Psoas muscle (tissue), 8 donors: ENCODE measurements at regions of chr9 and their contacts with region 1.

Region 1: GRCh38 chr9:93453047-93453914 is at the start of gene FAM120AOS:
- DNase-seq: peak; percentile 91 to 93
- ATAC-seq: peak; percentile 77 to 87 (median 81)
- H3K4me3 ChIP-seq: peak within 1 kb of the TSS; percentile 80
- H3K27ac ChIP-seq: peak within 1 kb of the TSS; percentile 98
- H3K4me1 ChIP-seq: peaks cover 50% of the 10 kb centered on the region
- H3K27me3 ChIP-seq: no peaks in the 10 kb centered on the region
- CTCF ChIP-seq: no peak
- total RNA-seq, gene FAM120AOS: 26.8 to 35.1 (median 29.9) TPM

Region 2: GRCh38 chr9:93095205-93096130 is 357.8 kb before region 1 on chr9:
- intact Hi-C with region 1: loop called in 1 of 2 experiments (anchors 10 kb)
- DNase-seq: peak; percentile 100
- ATAC-seq: peak; percentile 82 to 85 (median 84)
- H3K4me3 ChIP-seq: peak overlapping the region; percentile 99
- H3K27ac ChIP-seq: peak overlapping the region; percentile 98
- H3K4me1 ChIP-seq: peaks cover 32% of the 10 kb centered on the region
- H3K27me3 ChIP-seq: no peaks in the 10 kb centered on the region
- CTCF ChIP-seq: no peak

Region 3: GRCh38 chr9:93510041-93510440 is 56.8 kb after region 1 on chr9:
- intact Hi-C with region 1: loop called in 1 of 2 experiments (anchors 5 kb)
- DNase-seq: no peak
- ATAC-seq: no peak
- H3K4me3 ChIP-seq: no peak overlapping the region
- H3K27ac ChIP-seq: peak overlapping the region; percentile 48
- H3K4me1 ChIP-seq: peaks cover 66% of the 10 kb centered on the region
- H3K27me3 ChIP-seq: no peaks in the 10 kb centered on the region
- CTCF ChIP-seq: no peak

Region 4: DNA sequence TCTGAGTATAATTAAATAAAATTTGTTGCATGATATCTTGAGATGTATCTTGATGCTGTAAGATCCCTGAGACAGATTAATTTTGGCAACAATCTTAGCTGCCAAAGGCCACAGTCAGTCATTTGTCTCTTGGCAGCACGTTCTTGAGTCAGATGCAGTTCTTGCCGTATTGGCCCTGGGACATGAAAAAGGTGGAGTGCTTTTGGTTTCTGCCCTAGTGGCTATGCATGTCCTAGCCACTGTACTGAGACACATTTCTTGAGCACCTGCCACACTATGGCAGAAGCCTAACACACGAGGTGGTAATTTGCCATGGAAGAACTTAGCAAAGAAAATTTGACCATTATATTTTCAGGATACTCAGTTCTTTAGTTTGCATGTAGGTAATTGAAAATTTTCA is 78.1 kb after region 1 on chr9:
- intact Hi-C with region 1: loop called in 1 of 2 experiments (anchors 5 kb)
- DNase-seq: no peak
- ATAC-seq: peak; percentile 92 to 99 (median 97)
- H3K4me3 ChIP-seq: no peak overlapping the region
- H3K27ac ChIP-seq: peak overlapping the region; percentile 38
- H3K4me1 ChIP-seq: peaks cover 15% of the 10 kb centered on the region
- H3K27me3 ChIP-seq: no peaks in the 10 kb centered on the region
- CTCF ChIP-seq: peak; percentile 43

Region 5: DNA sequence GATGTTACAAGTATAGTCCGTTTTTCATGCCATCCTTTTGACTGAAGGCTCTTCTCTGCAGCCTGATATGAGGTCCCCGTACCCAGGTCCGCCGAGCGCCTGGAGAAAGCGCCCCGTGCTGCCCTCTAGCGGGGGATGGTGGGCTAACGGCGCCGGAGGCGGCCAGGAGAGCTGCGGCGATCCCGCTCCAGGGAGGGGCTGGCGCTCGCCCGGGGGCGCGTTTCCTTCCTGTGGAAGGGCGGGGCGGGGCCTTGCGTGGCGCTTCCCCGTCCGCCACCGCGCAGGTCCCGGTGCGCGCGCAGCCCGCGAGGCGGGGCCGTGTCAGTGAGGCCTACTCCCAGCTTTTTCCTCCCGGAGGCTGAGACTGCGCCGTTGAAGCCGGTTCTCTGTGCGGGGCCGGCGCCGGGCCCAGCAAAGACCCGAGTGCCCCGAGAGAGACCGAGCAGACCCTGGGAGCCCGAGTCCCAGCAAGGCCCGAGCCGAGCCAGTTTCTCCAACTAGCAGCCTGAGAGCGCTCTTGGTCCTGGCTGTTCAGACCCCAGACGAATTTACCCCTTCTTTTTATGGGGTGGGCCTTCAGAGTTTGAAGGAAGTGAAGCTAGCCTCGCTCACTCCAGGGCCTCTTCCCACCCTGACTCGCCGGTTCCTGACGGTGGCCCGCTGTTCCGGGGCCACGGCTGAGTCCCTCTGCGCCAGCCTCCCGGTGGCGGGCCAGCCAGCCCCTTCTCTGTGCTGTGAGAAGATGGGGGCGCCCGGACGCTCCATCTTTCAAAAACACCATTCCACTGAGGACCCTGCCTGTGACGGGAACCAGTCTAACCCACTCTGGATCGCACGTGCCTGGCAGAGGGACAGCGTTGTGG is 113.4 kb after region 1 on chr9:
- intact Hi-C with region 1: loop called (anchors 1 to 5 kb)
- DNase-seq: peak; percentile 99
- ATAC-seq: peak; percentile 97 to 99 (median 98)
- H3K4me3 ChIP-seq: peak overlapping the region; percentile 74
- H3K27ac ChIP-seq: peak overlapping the region; percentile 96
- H3K4me1 ChIP-seq: peaks cover 8% of the 10 kb centered on the region
- H3K27me3 ChIP-seq: no peaks in the 10 kb centered on the region
- CTCF ChIP-seq: peak; percentile 96

Region 6: DNA sequence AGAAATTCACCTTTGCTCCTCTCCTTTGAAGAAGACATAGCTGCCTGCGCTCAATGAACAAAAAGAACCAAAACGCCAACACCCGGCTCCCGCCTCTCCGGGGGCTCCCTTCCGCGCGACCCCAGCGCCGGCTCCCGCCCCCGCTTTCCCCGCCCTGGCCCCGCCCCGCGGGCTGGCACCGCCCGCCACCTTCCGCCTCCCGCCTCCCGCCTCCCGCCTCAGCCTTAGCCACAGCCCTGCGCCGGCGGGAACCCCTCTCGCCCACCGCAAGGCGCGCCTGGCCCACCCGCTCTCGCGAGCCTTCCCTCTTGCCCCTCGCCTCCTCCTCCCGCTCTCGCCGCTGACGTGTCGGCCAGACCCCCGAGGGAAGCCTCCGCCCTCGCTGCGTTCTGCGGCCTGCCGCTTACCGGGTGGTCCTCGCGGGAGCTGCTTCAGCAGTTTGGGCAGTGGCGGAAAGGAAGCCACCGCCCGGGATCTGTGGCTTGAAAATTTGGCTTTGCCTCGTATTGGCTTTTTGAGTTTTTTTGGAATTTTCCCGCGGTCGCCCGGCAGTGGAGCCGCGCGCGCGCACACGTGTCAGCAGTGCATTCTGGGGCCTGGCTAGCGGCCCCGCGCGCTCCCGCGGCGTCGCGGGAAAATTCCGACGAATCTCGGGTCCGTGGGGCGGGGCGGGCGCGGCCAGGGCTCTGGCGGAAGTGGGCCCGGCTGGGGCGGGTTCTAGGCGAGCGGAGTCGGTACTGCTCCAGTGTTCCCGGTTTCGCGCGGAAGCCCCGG is 1864.0 kb after region 1 on chr9 and contains the start of gene FANCC:
- intact Hi-C with region 1: loop called in 1 of 2 experiments (anchors 10 kb)
- DNase-seq: peak; percentile 94 to 95
- ATAC-seq: peak; percentile 91 to 96 (median 92)
- H3K4me3 ChIP-seq: peak within 1 kb of the TSS; percentile 100
- H3K27ac ChIP-seq: peak within 1 kb of the TSS; percentile 95
- H3K4me1 ChIP-seq: peaks cover 9% of the 10 kb centered on the region
- H3K27me3 ChIP-seq: no peaks in the 10 kb centered on the region
- CTCF ChIP-seq: no peak
- total RNA-seq, gene FANCC: 2.1 to 5.2 (median 4.2) TPM